Activated naive CD4-positive, alpha-beta T cell treated with anti-CD3 and anti-CD28 coated beads for 36 hours (primary cell): ENCODE measurements at regions of chr1 and their contacts with region 1.

Region 1: DNA sequence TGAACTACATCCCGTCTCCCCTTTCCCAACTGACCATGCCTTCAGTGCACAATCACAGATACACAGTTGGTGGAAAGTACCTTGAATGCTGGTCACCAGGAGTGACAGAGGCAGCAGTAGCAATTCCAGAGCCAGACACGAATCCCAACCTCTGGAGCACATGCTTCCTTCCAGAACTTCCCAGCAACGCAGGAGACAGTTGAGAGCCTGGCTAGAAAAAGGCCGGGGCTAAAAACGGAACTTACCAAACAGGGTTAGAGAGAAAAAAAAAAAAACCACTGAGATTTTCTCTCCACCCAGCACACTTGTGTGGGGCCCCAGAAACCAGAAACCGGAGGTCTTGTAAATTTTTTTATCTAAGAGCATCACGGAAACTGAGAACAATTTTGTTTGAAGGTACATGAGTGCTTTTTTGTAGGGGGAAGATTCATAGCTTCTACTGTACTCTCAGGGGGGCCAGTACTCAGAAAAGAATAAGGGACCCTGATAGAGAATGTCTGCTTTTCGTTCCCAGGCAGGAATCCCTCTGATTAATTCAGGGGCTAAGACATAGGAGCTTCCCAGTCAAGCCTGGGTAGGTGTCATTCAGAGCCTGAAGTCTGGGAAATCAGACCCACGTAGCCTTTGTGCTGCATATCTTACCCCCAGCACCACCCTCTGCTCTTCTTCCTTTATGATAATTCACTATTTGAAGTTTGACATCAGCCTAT is at the start of gene CD48:
- DNase-seq: peak; percentile 70
- H3K4me3 Mint-ChIP-seq: no peak within 1 kb of the TSS
- H3K27ac Mint-ChIP-seq: no peak within 1 kb of the TSS
- H3K4me1 Mint-ChIP-seq: peaks cover 28% of the 10 kb centered on the region
- H3K27me3 Mint-ChIP-seq: no peaks in the 10 kb centered on the region
- total RNA-seq, gene CD48: 338 to 340 TPM

Region 2: GRCh38 chr1:160739098-160739511 is 27.3 kb after region 1 on chr1 and contains the start of gene SLAMF7:
- CTCF ChIA-PET with region 1: interaction called, 3 read pairs
- intact Hi-C with region 1: loop called (anchors 1 kb)
- DNase-seq: peak; percentile 77
- H3K4me3 Mint-ChIP-seq: peak within 1 kb of the TSS; percentile 88
- H3K27ac Mint-ChIP-seq: peak within 1 kb of the TSS; percentile 94
- H3K4me1 Mint-ChIP-seq: peaks cover 87% of the 10 kb centered on the region
- H3K27me3 Mint-ChIP-seq: no peaks in the 10 kb centered on the region
- total RNA-seq, gene SLAMF7: 79.9 to 82.2 TPM

Region 3: DNA sequence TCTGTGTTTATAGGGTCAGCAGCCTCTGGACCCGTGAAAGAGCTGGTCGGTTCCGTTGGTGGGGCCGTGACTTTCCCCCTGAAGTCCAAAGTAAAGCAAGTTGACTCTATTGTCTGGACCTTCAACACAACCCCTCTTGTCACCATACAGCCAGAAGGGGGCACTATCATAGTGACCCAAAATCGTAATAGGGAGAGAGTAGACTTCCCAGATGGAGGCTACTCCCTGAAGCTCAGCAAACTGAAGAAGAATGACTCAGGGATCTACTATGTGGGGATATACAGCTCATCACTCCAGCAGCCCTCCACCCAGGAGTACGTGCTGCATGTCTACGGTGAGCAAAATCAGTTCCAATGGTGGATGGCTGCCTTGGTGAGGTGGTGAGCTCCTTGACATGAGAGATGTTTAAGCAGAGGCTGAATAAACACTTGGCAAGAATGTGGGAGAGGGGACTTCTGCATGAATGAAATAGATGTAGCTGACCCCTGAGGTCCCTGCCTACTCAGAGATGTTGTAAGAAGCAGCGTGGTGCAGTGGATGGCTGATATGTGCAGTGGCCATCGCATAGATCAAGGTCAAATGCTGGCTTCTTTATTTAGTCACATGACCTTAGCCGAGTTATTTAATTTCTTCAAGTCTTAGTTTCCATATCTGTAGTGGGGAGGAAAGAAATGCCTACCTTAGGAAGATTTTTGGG is 36.6 kb after region 1 on chr1:
- CTCF ChIA-PET with region 1: interaction called, 3 read pairs
- intact Hi-C with region 1: loop called (anchors 1 kb)
- DNase-seq: peak; percentile 28
- H3K4me3 Mint-ChIP-seq: no peak overlapping the region
- H3K27ac Mint-ChIP-seq: peak overlapping the region; percentile 81
- H3K4me1 Mint-ChIP-seq: peaks cover 94% of the 10 kb centered on the region
- H3K27me3 Mint-ChIP-seq: no peaks in the 10 kb centered on the region